ENCODE measurements at regions of chr7 and their contacts with region 1.

Region 1: DNA sequence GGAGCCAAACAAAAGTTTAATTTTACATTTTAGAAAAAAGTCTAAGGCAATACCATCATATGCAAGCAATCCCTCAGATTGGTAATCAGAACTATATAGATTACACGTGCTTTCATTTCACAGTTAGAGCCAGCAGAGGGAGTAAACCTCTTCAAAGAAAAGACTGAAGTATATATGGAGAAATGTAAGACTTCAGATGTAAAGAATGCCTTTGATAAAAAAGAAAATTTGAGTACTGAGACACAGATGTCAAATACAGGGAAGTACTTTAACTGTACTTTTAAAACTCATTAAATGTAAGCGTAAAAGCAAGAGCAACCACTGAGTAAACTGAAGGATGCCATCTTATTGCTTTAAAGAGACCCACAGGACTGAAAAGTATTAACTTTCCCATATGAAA is 101.4 kb upstream of the FAM133B start:
- DNase-seq: peak; percentile 83
- H3K4me3 ChIP-seq: no peak overlapping the region
- H3K27ac ChIP-seq: no peak overlapping the region
- H3K4me1 ChIP-seq: peaks cover 11% of the 10 kb centered on the region
- H3K27me3 ChIP-seq: no peaks in the 10 kb centered on the region
- CTCF ChIP-seq: peak; percentile 74

Region 2: GRCh38 chr7:92633211-92633906 is 58.2 kb before region 1 on chr7:
- CTCF ChIA-PET with region 1: no interaction called
- POLR2A ChIA-PET with region 1: no interaction called
- intact Hi-C with region 1: loop called (anchors 5 kb)
- DNase-seq: peak; percentile 97
- H3K4me3 ChIP-seq: peak overlapping the region; percentile 11
- H3K27ac ChIP-seq: peak overlapping the region; percentile 57
- H3K4me1 ChIP-seq: peaks cover 44% of the 10 kb centered on the region
- H3K27me3 ChIP-seq: no peaks in the 10 kb centered on the region
- CTCF ChIP-seq: no peak

Region 3: DNA sequence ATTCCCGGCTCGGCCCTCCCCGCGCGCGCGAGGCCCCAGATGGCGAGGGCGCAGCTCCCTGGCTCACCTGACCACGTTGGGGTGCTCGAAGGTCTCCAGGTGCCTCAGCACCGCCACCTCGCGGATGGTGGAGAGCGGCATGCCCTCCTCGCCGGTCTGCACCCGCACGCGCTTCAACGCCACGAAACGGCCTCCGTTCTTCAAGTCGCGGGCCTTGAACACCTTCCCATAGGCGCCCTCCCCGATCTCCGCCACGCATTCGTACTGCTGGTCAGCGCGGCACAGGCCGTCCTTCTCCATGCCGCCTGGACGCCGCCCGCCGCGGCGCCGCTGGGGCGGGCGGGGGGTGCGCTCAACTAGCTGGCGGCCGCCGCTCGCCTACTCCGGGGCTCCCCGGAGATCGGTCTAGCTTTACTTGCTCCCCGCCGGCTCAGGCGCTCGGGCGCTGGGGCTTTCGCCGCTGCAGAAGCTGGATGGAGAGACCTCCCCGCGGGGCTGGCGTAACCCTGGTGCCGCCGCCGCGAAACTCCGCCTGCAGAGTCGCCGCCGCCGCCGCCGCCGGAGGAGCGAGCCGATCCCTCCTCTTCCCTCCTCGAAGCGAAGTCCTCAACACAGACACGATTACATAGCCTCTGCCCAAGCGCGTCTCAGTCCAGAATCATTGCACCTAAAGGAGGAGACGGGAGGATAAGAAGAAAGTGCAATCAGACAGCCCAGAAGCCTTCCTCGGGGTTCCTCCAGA is 141.6 kb after region 1 on chr7:
- CTCF ChIA-PET with region 1: interaction called, 13 read pairs
- POLR2A ChIA-PET with region 1: no interaction called
- intact Hi-C with region 1: loop called (anchors 1 kb)
- DNase-seq: peak; percentile 89
- H3K4me3 ChIP-seq: peak overlapping the region; percentile 83
- H3K27ac ChIP-seq: peak overlapping the region; percentile 79
- H3K4me1 ChIP-seq: peaks cover 5% of the 10 kb centered on the region
- H3K27me3 ChIP-seq: peaks cover 14% of the 10 kb centered on the region
- CTCF ChIP-seq: peak; percentile 87

Region 4: GRCh38 chr7:92916674-92917224 is 225.2 kb after region 1 on chr7:
- CTCF ChIA-PET with region 1: no interaction called
- POLR2A ChIA-PET with region 1: no interaction called
- intact Hi-C with region 1: no loop called
- DNase-seq: peak; percentile 27
- H3K4me3 ChIP-seq: no peak overlapping the region
- H3K27ac ChIP-seq: no peak overlapping the region
- H3K4me1 ChIP-seq: no peaks in the 10 kb centered on the region
- H3K27me3 ChIP-seq: peaks cover 4% of the 10 kb centered on the region
- CTCF ChIP-seq: no peak

Region 5: DNA sequence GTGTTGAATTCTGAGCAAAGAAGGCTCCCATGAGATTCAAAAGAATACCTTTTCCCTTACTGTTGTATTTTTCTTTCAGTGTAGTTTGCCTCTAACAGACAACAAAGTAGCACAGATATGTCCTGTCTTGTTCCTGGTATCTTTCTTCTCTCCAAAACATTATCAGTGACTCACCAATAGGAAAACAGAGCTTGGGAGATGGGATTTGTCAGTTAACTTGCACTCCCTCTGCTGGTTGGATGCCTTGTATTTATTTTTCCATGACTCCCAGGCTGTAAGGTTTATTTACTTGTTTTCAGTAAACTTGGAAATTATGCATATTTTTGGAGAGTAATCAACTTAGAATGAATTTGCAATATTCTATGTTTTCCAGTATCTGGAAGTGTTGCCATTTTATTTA is 296.5 kb after region 1 on chr7:
- CTCF ChIA-PET with region 1: no interaction called
- POLR2A ChIA-PET with region 1: no interaction called
- intact Hi-C with region 1: loop called (anchors 2 kb)
- DNase-seq: peak; percentile 53
- H3K4me3 ChIP-seq: no peak overlapping the region
- H3K27ac ChIP-seq: no peak overlapping the region
- H3K4me1 ChIP-seq: no peaks in the 10 kb centered on the region
- H3K27me3 ChIP-seq: peaks cover 3% of the 10 kb centered on the region
- CTCF ChIP-seq: peak; percentile 56

Measured in A673 (cell line).